Naive thymus-derived CD4-positive, alpha-beta T cell (primary cell): ENCODE measurements at regions of chr3 and their contacts with region 1.

Region 1: GRCh38 chr3:66407611-66408218 is 93.1 kb downstream of the LRIG1 start:
- DNase-seq: peak; percentile 45 to 79 (median 65)
- ATAC-seq: peak; percentile 89
- H3K4me3 ChIP-seq: no peak overlapping the region
- H3K4me3 Mint-ChIP-seq: no peak overlapping the region
- H3K27ac ChIP-seq: no peak overlapping the region
- H3K27ac Mint-ChIP-seq: no peak overlapping the region
- H3K4me1 ChIP-seq: no peaks in the 10 kb centered on the region
- H3K4me1 Mint-ChIP-seq: peaks cover 0 to 10% (median 0%) of the 10 kb centered on the region in 7 donors
- H3K27me3 ChIP-seq: no peaks in the 10 kb centered on the region
- H3K27me3 Mint-ChIP-seq: no peaks in the 10 kb centered on the region

Region 2: DNA sequence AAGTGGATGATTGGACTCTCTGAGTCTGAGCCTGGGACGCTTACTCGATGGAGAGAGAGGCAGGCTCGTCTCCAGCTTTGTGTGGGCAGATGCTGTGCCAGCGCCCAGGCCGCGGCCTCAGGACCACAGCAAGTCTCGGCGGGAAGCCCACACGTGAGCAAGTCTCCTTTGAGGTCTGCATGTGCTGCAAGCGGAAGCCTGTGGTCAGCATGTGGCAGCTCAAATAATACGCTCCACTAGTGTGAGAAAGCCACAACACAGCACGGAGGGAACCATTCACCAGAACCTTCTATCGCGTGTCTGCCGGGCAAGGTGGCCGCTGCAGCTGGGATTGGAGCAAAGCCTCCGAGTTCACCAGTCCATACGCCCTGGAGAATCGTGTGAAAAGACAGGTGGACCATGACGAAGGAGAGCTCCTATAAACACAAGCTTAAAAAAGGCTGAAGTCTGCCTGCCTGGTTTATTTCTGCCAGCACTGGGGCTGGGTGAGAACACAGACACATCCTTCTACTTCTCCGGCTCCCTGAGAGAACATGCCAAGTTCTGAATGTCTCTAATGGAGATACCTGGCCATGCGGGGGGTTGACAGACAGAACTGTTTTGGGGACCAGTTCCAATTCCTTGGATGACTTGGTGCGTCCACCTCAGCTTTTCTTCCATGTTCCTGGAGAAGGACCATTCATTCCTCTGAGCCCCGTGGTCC is 175.2 kb after region 1 on chr3:
- CTCF ChIA-PET with region 1: no interaction called
- POLR2A ChIA-PET with region 1: no interaction called
- intact Hi-C with region 1: loop called in 1 of 2 experiments (anchors 10 kb)
- DNase-seq: peak in 8 of 9 donors; percentile 15 to 54 (median 27)
- ATAC-seq: peak; percentile 89
- H3K4me3 ChIP-seq: no peak overlapping the region
- H3K4me3 Mint-ChIP-seq: peak overlapping the region in 8 of 10 donors; percentile 12 to 58 (median 38)
- H3K27ac ChIP-seq: no peak overlapping the region
- H3K27ac Mint-ChIP-seq: peak overlapping the region in 2 of 9 donors; percentile 13 to 56
- H3K4me1 ChIP-seq: peaks cover 7 to 25% of the 10 kb centered on the region in 2 donors
- H3K4me1 Mint-ChIP-seq: peaks cover 0 to 26% (median 8%) of the 10 kb centered on the region in 7 donors
- H3K27me3 ChIP-seq: peaks cover 0 to 21% of the 10 kb centered on the region in 2 donors
- H3K27me3 Mint-ChIP-seq: peaks cover 0 to 27% (median 7%) of the 10 kb centered on the region in 5 donors

Region 3: DNA sequence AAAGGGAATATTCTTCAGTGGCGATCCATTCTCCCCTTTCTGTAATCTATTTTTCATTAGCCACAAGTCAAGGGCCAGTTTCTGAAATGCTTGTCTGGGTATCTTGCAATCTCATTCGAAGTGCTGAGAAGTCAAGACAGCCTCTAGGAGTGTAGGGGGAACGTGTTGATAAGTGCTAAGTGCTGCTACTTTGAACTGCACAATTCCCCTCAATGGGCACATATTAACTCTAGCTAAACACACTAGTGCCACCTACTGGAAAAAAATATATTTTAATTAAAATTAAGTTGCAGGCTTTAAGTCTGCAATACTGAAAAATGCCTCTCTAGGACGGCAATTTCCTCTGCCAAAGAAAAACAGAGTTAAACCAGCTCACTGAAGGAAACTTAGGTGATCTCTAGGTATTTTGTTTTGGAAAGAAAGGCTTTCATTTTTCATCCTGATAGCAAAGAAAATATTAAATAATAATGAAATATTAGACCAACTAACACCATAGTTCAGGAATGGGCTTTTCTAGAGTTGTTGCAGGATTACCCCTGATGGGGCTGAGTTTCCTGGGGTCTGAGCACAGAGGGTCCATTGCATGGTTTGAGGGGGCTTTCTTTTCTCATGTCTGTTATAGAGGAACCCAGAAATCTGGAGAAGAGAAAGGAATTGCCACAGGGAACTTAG is 408.5 kb after region 1 on chr3:
- CTCF ChIA-PET with region 1: interaction called, 39 read pairs
- POLR2A ChIA-PET with region 1: no interaction called
- intact Hi-C with region 1: loop called (anchors 1 kb)
- DNase-seq: peak in 6 of 9 donors; percentile 39 to 64 (median 62)
- ATAC-seq: peak; percentile 85
- H3K4me3 ChIP-seq: no peak overlapping the region
- H3K4me3 Mint-ChIP-seq: no peak overlapping the region
- H3K27ac ChIP-seq: no peak overlapping the region
- H3K27ac Mint-ChIP-seq: no peak overlapping the region
- H3K4me1 ChIP-seq: no peaks in the 10 kb centered on the region
- H3K4me1 Mint-ChIP-seq: peaks cover 0 to 2% (median 0%) of the 10 kb centered on the region in 7 donors
- H3K27me3 ChIP-seq: no peaks in the 10 kb centered on the region
- H3K27me3 Mint-ChIP-seq: peaks cover 0 to 22% (median 3%) of the 10 kb centered on the region in 5 donors